SK-N-SH (cell line): ENCODE measurements at regions of chr12 and their contacts with region 1.

Region 1: GRCh38 chr12:442235-442884 is 17.4 kb upstream of the B4GALNT3 start:
- DNase-seq: peak; percentile 70
- H3K4me3 ChIP-seq: no peak overlapping the region; a peak in 1 of 4 replicates
- H3K27ac ChIP-seq: no peak overlapping the region
- H3K4me1 ChIP-seq: no peaks in the 10 kb centered on the region
- H3K27me3 ChIP-seq: no peaks in the 10 kb centered on the region
- CTCF ChIP-seq: peak; percentile 79
- EP300 ChIP-seq: no peak
- RAD21 ChIP-seq: peak; percentile 85

Region 2: GRCh38 chr12:452667-453210 is 10.4 kb after region 1 on chr12:
- CTCF ChIA-PET with region 1: interaction called, 64 read pairs
- POLR2A ChIA-PET with region 1: no interaction called
- DNase-seq: no peak
- H3K4me3 ChIP-seq: no peak overlapping the region
- H3K27ac ChIP-seq: no peak overlapping the region
- H3K4me1 ChIP-seq: no peaks in the 10 kb centered on the region
- H3K27me3 ChIP-seq: peaks cover 15% of the 10 kb centered on the region
- CTCF ChIP-seq: peak; percentile 17; the same call in 1 of the 2 replicates
- EP300 ChIP-seq: no peak
- RAD21 ChIP-seq: no peak

Region 3: DNA sequence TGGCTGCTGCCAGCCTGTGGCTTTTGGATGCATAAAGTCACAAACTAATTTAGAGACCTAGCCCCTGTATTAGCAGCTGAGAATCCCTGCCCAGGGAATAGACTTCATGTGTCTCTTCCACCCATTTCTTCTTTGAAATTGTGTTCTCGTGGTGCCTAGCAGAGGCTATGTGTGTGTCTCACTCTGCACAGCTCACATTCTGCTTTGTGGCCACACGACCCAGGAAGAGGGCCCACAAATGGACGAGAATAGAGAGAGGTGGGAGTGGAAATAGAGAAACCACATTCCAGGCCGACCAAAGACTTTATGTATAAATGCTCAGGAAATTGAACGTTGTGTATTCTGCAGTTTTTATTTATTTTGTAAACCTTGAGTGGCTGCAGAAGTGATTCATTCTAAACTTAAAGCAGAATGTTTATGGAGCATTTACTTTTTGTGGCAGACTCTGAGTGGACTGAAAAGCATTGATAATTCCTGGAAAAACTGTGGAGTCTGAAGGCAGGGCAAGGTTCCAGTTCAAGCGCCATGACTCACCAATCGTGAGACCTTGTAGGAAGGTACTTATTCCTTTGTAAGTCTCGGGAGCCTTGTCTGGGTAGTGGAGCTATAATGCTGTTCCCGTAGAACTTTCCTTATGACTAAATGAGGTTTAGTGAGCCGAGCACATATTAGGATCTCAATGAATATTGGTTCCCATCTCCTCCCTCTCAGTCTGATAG is 26.5 kb after region 1 on chr12:
- CTCF ChIA-PET with region 1: interaction called, 18 read pairs
- POLR2A ChIA-PET with region 1: no interaction called
- DNase-seq: no peak
- H3K4me3 ChIP-seq: no peak overlapping the region
- H3K27ac ChIP-seq: no peak overlapping the region
- H3K4me1 ChIP-seq: no peaks in the 10 kb centered on the region
- H3K27me3 ChIP-seq: no peaks in the 10 kb centered on the region; the same call in 1 of the 2 replicates
- CTCF ChIP-seq: no peak
- EP300 ChIP-seq: no peak
- RAD21 ChIP-seq: no peak

Region 4: GRCh38 chr12:553205-554000 is 111.0 kb after region 1 on chr12:
- CTCF ChIA-PET with region 1: interaction called, 560 read pairs
- POLR2A ChIA-PET with region 1: interaction called, 3 read pairs
- DNase-seq: no peak
- H3K4me3 ChIP-seq: no peak overlapping the region
- H3K27ac ChIP-seq: no peak overlapping the region
- H3K4me1 ChIP-seq: no peaks in the 10 kb centered on the region
- H3K27me3 ChIP-seq: no peaks in the 10 kb centered on the region; the same call in 1 of the 2 replicates
- CTCF ChIP-seq: no peak
- EP300 ChIP-seq: no peak
- RAD21 ChIP-seq: no peak